ENCODE measurements at regions of chr14 and their contacts with region 1.

Region 1: DNA sequence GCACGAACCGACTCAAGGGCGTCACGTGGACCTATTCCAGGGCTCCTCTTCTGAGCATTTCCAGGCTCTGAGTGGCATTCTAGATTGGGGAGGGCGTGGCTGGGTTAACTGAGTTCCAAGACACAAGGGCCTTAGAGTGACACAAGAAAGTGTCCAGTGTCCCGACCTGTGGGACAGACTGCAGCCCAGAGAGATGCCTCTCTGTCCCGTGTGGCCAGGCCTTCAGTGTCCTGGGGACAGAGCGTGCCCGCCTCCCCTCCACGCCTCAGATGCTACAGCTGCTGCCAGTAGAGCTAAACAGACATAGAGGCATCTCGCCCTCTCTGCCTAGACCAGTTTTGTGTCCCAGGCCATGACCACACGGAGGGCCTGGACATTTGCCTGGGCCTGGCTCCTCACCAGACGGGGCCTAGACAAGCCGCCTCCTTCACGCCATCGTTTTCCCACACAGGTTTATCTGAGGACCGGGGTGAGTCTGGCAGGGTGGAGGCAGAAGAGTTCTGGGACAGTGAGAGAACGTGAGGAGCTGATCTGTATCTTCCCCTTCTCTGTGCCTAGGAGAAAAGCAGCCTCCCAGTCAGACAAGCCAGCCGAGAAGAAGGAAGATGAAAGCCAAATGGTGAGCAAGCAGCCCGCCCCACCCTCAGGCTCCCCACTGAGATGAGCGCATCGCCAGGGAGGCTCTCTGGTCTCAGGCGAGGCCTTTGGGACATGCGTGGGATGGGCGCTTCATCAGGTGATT is 27.1 kb downstream of the DEGS2 start:
- DNase-seq: no peak
- H3K4me3 ChIP-seq: no peak overlapping the region
- H3K27ac ChIP-seq: no peak overlapping the region
- H3K4me1 ChIP-seq: no peaks in the 10 kb centered on the region
- H3K27me3 ChIP-seq: no peaks in the 10 kb centered on the region
- CTCF ChIP-seq: no peak

Region 2: DNA sequence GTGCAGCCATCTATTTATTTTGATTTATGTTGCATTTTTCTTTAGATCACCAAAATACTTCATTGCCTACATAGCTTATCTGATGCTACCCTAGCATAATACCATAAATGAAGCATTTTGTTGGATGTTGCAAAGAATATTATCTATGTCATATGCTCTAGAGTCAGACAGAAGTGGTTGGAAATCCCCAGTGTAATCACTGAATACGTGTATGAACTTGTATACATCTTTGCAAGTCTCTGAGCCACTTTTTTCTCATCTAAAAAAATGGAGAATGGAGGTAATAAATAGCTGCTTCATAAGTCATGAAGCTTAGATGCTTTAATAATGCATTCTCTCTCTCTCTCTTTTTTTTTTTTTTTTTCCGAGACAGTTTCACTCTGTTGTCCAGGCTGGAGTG is 48.6 kb before region 1 on chr14:
- CTCF ChIA-PET with region 1: interaction called, 3 read pairs
- dilution Hi-C with region 1: loop called (anchors 5 kb)
- in situ Hi-C with region 1: no loop called
- intact Hi-C with region 1: no loop called
- DNase-seq: peak; percentile 95
- H3K4me3 ChIP-seq: no peak overlapping the region
- H3K27ac ChIP-seq: peak overlapping the region; percentile 62
- H3K4me1 ChIP-seq: peaks cover 29% of the 10 kb centered on the region
- H3K27me3 ChIP-seq: no peaks in the 10 kb centered on the region
- CTCF ChIP-seq: no peak

Measured in mammary epithelial cell (primary cell).